ENCODE measurements at regions of chr16 and their contacts with region 1.

Region 1: GRCh38 chr16:81873843-81874752 is 95.0 kb downstream of the PLCG2 start:
- DNase-seq: peak; percentile 65 to 73 (median 70)
- ATAC-seq: peak; percentile 96
- H3K4me3 ChIP-seq: no peak overlapping the region
- H3K27ac ChIP-seq: no peak overlapping the region
- H3K4me1 ChIP-seq: 0 out of 5 replicates have a peak, but pooled peaks cover 0 to 5% of the 10 kb centered on the region in 2 experiments
- H3K27me3 ChIP-seq: peaks cover 16 to 45% of the 10 kb centered on the region in 2 experiments
- CTCF ChIP-seq: peak; percentile 90 to 97 (median 94)
- EP300 ChIP-seq: no peak
- POLR2A ChIP-seq: no peak
- RAD21 ChIP-seq: peak; percentile 75 to 88

Region 2: DNA sequence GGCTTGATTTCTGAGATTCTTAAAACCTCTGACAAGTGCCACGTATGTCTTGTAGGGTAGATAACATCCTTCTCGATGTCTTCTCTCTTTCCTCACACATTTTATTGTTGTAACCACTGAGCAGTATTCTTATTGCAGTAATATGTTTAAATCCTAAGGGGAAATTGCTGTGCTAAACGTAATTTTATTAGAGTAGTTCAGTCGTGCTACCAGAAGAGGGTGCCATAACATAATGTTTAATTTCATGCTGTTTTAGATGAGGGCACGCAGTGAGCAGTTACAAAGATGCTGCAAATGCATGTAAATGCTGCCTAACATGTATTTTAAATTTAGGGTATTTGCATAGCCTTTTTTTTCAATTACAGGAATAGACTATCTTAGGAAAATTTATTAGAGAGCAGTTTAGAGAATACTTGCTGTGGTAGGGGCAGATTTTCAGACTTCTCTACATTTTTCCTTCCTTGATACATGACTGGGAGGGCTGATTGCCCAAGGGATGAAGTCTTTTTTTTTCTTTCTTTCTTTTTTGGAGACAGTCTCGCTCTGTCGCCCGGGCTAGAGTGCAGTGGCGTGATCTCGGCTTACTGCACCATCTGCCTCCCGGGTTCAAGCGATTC is 507.7 kb before region 1 on chr16:
- CTCF ChIA-PET with region 1: interaction called, 6 read pairs
- POLR2A ChIA-PET with region 1: no interaction called
- in situ Hi-C with region 1: no loop called
- intact Hi-C with region 1: loop called (anchors 10 kb)
- DNase-seq: peak; percentile 52 to 63 (median 60)
- ATAC-seq: peak; percentile 84
- H3K4me3 ChIP-seq: no peak overlapping the region
- H3K27ac ChIP-seq: no peak overlapping the region
- H3K4me1 ChIP-seq: no peaks in the 10 kb centered on the region
- H3K27me3 ChIP-seq: no peaks in the 10 kb centered on the region
- CTCF ChIP-seq: peak; percentile 70 to 89 (median 74)
- EP300 ChIP-seq: no peak
- POLR2A ChIP-seq: no peak
- RAD21 ChIP-seq: peak; percentile 86 to 92

Region 3: DNA sequence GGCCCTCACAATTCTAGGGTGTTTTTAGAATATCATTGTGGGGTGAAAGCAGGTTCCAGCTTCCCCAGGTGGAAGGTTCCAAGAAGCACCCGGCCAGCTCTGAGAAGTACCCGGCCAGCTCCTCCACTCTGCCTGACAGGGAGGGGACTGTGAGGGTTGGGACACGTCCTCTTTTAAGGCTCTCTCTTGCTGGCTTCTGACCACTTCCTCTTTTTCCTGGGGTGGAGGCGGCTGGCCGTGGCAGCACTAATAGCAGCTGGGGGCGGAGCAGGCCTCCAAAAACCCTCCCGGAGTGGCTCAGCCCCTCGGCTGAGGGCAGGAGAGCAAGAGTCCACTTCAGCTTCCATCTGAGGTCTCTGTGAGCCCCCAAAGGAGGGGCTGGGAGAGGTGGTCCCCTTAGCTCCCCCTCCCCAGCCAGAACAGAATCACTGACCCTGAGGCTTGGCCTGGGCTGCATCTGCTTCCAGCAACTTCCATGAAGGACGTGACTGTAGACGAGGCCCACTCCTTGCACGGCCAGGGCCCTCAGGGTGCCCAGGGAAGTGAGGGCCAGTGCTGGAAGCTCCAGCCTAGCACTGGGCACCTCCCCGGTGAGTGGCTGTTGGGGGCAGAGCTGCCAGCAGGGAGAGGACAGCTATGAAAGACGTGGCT is 121.7 kb before region 1 on chr16:
- CTCF ChIA-PET with region 1: interaction called, 3 read pairs
- POLR2A ChIA-PET with region 1: no interaction called
- in situ Hi-C with region 1: no loop called
- intact Hi-C with region 1: loop called (anchors 5 kb)
- DNase-seq: peak; percentile 59 to 94 (median 74)
- ATAC-seq: peak; percentile 98
- H3K4me3 ChIP-seq: no peak overlapping the region
- H3K27ac ChIP-seq: peak overlapping the region; percentile 76
- H3K4me1 ChIP-seq: peaks cover 39 to 40% of the 10 kb centered on the region in 2 experiments
- H3K27me3 ChIP-seq: no peaks in the 10 kb centered on the region
- CTCF ChIP-seq: 0 out of 6 replicates have a peak, but pooled peaks of 1 of the 3 experiments have one; percentile 6
- EP300 ChIP-seq: peak; percentile 36
- POLR2A ChIP-seq: peak; percentile 75
- RAD21 ChIP-seq: peak in 1 of 2 experiments; percentile 37; a peak in 3 of 4 replicates

Region 4: DNA sequence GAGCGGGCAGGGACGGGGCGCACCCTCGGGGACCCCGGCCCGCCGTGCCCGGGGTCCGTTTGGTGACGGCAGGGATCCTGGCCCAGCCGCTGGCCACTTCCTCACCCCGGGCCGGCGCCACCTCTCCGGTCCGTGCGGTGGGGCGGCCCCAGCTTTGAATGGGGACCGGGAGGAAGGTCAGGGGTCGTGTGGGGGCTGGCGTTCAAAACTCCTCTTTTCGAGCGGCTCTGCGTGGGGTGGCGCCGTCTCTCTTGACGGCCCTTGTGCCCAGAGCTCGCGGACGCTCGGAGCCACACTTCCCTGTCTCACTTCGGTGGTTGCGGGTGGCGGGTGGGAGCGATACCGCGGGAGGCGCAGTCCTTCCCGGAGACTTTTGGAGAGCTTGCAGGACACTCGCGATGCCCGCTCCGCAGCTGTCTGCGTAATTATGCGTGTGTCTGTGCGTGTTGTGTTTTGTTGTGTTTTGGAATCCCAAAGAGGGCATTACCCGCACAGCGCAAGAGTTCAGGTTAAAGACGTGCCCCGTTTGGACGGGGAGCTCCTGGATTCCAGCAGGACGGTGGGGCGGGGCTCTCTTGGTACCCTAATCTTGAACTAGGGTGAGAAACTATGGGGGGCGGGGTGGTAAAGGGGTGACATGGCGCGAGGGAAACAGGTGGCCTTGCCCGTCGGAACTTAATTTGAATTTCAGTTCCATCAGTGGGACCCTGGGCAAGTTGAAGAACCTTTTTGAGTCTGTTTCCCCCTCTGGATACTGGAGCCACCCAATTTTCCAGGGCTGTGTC is 94.4 kb before region 1 on chr16:
- CTCF ChIA-PET with region 1: no interaction called
- POLR2A ChIA-PET with region 1: no interaction called
- in situ Hi-C with region 1: no loop called
- intact Hi-C with region 1: loop called (anchors 5 kb)
- DNase-seq: peak in 3 of 4 experiments; percentile 39 to 46 (median 46)
- ATAC-seq: peak; percentile 27
- H3K4me3 ChIP-seq: peak overlapping the region; percentile 54
- H3K27ac ChIP-seq: no peak overlapping the region
- H3K4me1 ChIP-seq: peaks cover 3 to 14% of the 10 kb centered on the region in 2 experiments; a peak in 4 of 5 replicates
- H3K27me3 ChIP-seq: peaks cover 21 to 28% of the 10 kb centered on the region in 2 experiments
- CTCF ChIP-seq: 0 out of 6 replicates have a peak, but pooled peaks of 1 of the 3 experiments have one; percentile 15
- EP300 ChIP-seq: no peak
- POLR2A ChIP-seq: no peak
- RAD21 ChIP-seq: no peak

Region 5: GRCh38 chr16:82082543-82083244 is 208.6 kb after region 1 on chr16:
- CTCF ChIA-PET with region 1: no interaction called
- POLR2A ChIA-PET with region 1: no interaction called
- in situ Hi-C with region 1: no loop called
- intact Hi-C with region 1: no loop called
- DNase-seq: no peak
- ATAC-seq: no peak
- H3K4me3 ChIP-seq: no peak overlapping the region
- H3K27ac ChIP-seq: no peak overlapping the region
- H3K4me1 ChIP-seq: no peaks in the 10 kb centered on the region
- H3K27me3 ChIP-seq: no peaks in the 10 kb centered on the region
- CTCF ChIP-seq: no peak
- EP300 ChIP-seq: no peak
- POLR2A ChIP-seq: no peak
- RAD21 ChIP-seq: no peak